ENCODE measurements at regions of chr12 and their contacts with region 1.

Region 1: GRCh38 chr12:27794818-27795584 is 15.0 kb upstream of the MANSC4 start:
- DNase-seq: no peak
- H3K4me3 ChIP-seq: no peak overlapping the region
- H3K4me3 Mint-ChIP-seq: no peak overlapping the region
- H3K27ac Mint-ChIP-seq: no peak overlapping the region
- H3K4me1 ChIP-seq: no peaks in the 10 kb centered on the region
- H3K4me1 Mint-ChIP-seq: no peaks in the 10 kb centered on the region
- H3K27me3 ChIP-seq: no peaks in the 10 kb centered on the region
- H3K27me3 Mint-ChIP-seq: no peaks in the 10 kb centered on the region
- CTCF ChIP-seq: no peak

Region 2: GRCh38 chr12:27260746-27261145 is 534.3 kb before region 1 on chr12:
- CTCF ChIA-PET with region 1: no interaction called
- POLR2A ChIA-PET with region 1: no interaction called
- intact Hi-C with region 1: loop called (anchors 5 kb)
- DNase-seq: no peak
- H3K4me3 ChIP-seq: no peak overlapping the region
- H3K4me3 Mint-ChIP-seq: no peak overlapping the region
- H3K27ac Mint-ChIP-seq: no peak overlapping the region
- H3K4me1 ChIP-seq: no peaks in the 10 kb centered on the region
- H3K4me1 Mint-ChIP-seq: peaks cover 7% of the 10 kb centered on the region
- H3K27me3 ChIP-seq: no peaks in the 10 kb centered on the region
- H3K27me3 Mint-ChIP-seq: no peaks in the 10 kb centered on the region
- CTCF ChIP-seq: no peak